AG04449 (cell line): ENCODE measurements at regions of chr20 and their contacts with region 1.

Region 1: DNA sequence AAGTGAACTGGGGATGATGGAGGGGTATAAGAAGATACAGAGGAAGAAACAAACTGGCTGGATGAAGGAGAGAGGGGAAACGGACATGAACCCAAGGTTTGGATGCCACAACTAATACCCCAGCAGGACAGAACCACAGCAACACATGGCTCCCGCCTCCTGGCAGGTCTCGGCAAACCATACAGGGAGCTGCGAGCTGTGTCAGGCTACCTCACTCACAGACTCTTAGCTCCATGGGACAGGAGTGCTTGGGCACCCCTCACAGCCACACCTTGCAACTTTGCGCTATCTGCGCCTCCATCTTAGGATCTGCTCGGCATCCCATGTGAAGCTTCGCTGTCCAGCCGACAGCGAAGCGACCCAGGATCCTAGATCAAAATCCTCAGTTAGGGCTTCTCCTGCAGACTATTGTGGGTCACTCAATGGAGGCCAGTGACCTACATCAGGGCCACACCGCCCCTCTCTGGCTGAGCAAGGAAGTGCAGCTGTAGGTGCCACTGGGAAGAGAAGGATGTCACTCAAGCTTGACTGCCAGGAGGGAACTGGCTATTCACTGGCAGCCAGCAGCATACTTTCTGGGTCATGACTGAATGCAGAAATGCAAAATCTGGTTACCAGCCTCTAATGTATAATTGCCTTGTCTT is 174.4 kb upstream of the RIN2 start:
- DNase-seq: no peak
- H3K4me3 ChIP-seq: no peak overlapping the region
- CTCF ChIP-seq: peak; percentile 81

Region 2: GRCh38 chr20:19212821-19213502 is 370.7 kb before region 1 on chr20:
- CTCF ChIA-PET with region 1: interaction called, 114 read pairs
- POLR2A ChIA-PET with region 1: no interaction called
- DNase-seq: no peak
- H3K4me3 ChIP-seq: peak overlapping the region; percentile 38
- CTCF ChIP-seq: peak; percentile 38

Region 3: GRCh38 chr20:19571996-19572395 is 11.7 kb before region 1 on chr20:
- CTCF ChIA-PET with region 1: interaction called, 18 read pairs
- POLR2A ChIA-PET with region 1: no interaction called
- DNase-seq: no peak
- H3K4me3 ChIP-seq: no peak overlapping the region
- CTCF ChIP-seq: no peak